ENCODE measurements at regions of chr16 and their contacts with region 1.

Region 1: DNA sequence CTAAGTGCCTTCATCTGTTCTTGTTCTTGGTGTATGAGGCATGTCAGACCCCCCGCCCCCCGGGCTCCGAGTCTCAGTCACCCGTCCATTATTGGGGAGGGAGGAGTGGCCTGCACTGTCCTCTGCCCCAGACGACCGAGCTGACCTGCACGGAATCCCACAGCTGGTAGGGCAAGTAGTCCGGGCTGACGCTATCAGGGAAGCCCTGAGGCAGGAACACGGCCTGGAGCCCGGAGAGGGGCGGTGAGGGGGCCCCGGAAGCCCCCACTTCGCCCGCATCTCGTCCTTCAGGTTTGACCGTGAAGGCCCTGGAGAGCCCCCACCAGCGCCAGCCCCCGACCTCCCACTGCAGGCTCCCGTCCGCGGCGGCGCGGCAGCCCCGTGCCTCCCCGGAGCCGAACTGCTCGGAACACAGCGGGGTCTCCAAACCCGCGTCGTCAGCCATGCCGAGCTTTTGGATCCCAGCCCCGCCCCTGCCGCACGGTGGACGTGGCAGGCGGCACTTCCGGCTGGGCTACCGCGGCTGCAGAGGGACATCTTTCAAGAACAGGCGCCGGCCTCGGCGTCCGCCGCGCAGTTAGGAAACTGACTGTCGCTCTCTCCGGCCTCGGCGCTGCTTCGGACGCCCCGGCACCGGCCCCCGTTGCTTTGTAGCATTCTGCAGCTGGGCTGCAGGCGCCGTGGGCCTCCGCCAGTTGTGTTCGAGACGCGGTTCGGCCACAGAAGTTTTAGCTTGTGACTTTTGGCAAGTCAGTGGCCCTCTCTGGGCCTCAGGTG is at the start of gene RUSF1:
- DNase-seq: peak; percentile 89
- ATAC-seq: peak; percentile 93
- H3K4me3 ChIP-seq: peak within 1 kb of the TSS; percentile 90 to 98 (median 90)
- H3K27ac ChIP-seq: peak within 1 kb of the TSS; percentile 89
- H3K4me1 ChIP-seq: peaks cover 46% of the 10 kb centered on the region
- H3K27me3 ChIP-seq: peaks cover 0 to 6% of the 10 kb centered on the region in 2 experiments; a peak in 2 of 5 replicates
- CTCF ChIP-seq: peak; percentile 37; the same call in 1 of the 2 replicates
- EP300 ChIP-seq: peak; percentile 52 to 55; a peak in 2 of 4 replicates
- POLR2A ChIP-seq: peak; percentile 91 to 96
- RAD21 ChIP-seq: peak; percentile 42
- total RNA-seq, gene RUSF1: 18.3 and 40.8 TPM in 2 replicates

Region 2: GRCh38 chr16:31354394-31355291 is 153.5 kb before region 1 on chr16 and contains the start of gene ITGAX:
- CTCF ChIA-PET with region 1: no interaction called
- POLR2A ChIA-PET with region 1: no interaction called
- in situ Hi-C with region 1: no loop called
- intact Hi-C with region 1: no loop called
- DNase-seq: no peak
- ATAC-seq: no peak
- H3K4me3 ChIP-seq: no peak within 1 kb of the TSS
- H3K27ac ChIP-seq: no peak within 1 kb of the TSS
- H3K4me1 ChIP-seq: no peaks in the 10 kb centered on the region
- H3K27me3 ChIP-seq: peaks cover 10 to 39% of the 10 kb centered on the region in 2 experiments; a peak in 4 of 5 replicates
- CTCF ChIP-seq: no peak
- EP300 ChIP-seq: no peak
- POLR2A ChIP-seq: no peak
- RAD21 ChIP-seq: no peak
- total RNA-seq, gene ITGAX: not detected in 2 replicates

Region 3: DNA sequence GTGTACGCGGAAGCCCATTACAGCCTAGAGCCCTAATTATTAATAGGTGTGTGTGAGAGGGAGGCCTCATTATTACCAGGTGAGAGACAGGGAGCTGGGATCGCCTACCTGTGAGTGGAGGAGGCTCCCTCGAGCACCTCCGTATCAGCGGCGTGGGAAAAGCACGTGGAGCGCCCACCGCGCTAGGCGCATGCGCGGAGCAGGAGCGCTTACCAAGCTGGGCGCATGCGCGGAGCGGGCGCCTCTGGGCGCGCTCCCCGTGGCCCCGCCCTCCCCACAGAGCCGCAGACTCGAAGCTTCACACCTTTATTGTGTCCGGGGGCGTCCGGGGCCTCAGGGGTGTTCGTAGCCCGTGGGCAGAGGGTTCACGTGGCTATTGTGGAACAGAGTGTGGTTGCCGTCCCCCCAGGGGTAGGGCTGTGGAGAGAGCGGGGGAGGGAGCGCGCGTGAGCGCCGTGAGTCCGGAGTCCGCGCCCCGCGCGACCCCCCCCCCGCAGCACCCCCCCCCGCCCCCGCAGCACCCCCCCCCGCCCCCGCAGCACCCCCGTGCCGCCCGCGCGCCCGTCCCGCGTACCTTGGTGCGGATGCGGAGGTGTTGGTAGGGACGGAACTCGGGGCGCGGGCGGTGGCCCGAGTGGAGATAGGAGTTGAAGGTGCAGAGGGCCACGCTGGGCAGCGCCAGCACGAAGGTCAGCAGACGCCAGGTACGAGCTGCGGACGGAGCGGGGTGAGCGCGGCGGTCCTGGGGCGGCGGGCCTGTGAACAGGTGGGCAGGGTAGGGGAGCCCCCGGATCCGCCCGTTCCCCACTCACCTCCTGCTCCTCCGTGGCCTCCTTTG is 80.5 kb before region 1 on chr16:
- CTCF ChIA-PET with region 1: no interaction called
- POLR2A ChIA-PET with region 1: no interaction called
- in situ Hi-C with region 1: no loop called
- intact Hi-C with region 1: no loop called
- DNase-seq: no peak
- ATAC-seq: no peak
- H3K4me3 ChIP-seq: no peak overlapping the region
- H3K27ac ChIP-seq: no peak overlapping the region
- H3K4me1 ChIP-seq: no peaks in the 10 kb centered on the region
- H3K27me3 ChIP-seq: peaks cover 0 to 19% of the 10 kb centered on the region in 2 experiments; a peak in 4 of 5 replicates
- CTCF ChIP-seq: no peak
- EP300 ChIP-seq: no peak
- POLR2A ChIP-seq: no peak
- RAD21 ChIP-seq: no peak

Region 4: GRCh38 chr16:31476303-31477219 is 31.6 kb before region 1 on chr16:
- CTCF ChIA-PET with region 1: no interaction called
- POLR2A ChIA-PET with region 1: interaction called, 40 read pairs
- in situ Hi-C with region 1: no loop called
- intact Hi-C with region 1: loop called (anchors 2 kb)
- DNase-seq: peak; percentile 63
- ATAC-seq: peak; percentile 63
- H3K4me3 ChIP-seq: peak overlapping the region; percentile 71 to 94 (median 92)
- H3K27ac ChIP-seq: peak overlapping the region; percentile 80
- H3K4me1 ChIP-seq: peaks cover 77% of the 10 kb centered on the region
- H3K27me3 ChIP-seq: peaks cover 0 to 16% of the 10 kb centered on the region in 2 experiments; a peak in 3 of 5 replicates
- CTCF ChIP-seq: no peak
- EP300 ChIP-seq: no peak
- POLR2A ChIP-seq: peak; percentile 8 to 72; a peak in 2 of 4 replicates
- RAD21 ChIP-seq: no peak

Region 5: DNA sequence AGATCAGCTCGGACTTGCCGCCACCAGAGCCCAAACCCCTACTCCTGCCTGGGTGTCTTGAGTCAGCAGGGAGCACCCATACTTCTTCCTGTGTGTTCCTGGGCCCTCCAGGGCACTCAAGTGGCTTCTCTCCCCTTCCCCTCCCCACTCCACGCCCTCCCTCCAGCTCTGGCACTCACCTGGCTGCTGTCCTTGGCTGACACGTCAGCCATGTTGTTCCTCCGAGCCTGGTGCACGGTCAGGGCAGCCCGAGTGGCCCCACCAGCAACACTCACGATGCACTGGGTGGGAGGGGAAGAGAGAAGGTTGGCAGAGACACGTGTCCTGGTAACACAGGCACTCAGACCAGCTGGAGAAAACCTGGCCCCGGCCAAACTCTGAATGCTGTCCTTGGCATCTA is 11.4 kb before region 1 on chr16:
- CTCF ChIA-PET with region 1: no interaction called
- POLR2A ChIA-PET with region 1: interaction called, 14 read pairs
- in situ Hi-C with region 1: no loop called
- intact Hi-C with region 1: no loop called
- DNase-seq: no peak
- ATAC-seq: no peak
- H3K4me3 ChIP-seq: no peak overlapping the region
- H3K27ac ChIP-seq: no peak overlapping the region
- H3K4me1 ChIP-seq: peaks cover 7% of the 10 kb centered on the region
- H3K27me3 ChIP-seq: no peaks in the 10 kb centered on the region
- CTCF ChIP-seq: no peak
- EP300 ChIP-seq: no peak
- POLR2A ChIP-seq: no peak
- RAD21 ChIP-seq: no peak

Region 6: DNA sequence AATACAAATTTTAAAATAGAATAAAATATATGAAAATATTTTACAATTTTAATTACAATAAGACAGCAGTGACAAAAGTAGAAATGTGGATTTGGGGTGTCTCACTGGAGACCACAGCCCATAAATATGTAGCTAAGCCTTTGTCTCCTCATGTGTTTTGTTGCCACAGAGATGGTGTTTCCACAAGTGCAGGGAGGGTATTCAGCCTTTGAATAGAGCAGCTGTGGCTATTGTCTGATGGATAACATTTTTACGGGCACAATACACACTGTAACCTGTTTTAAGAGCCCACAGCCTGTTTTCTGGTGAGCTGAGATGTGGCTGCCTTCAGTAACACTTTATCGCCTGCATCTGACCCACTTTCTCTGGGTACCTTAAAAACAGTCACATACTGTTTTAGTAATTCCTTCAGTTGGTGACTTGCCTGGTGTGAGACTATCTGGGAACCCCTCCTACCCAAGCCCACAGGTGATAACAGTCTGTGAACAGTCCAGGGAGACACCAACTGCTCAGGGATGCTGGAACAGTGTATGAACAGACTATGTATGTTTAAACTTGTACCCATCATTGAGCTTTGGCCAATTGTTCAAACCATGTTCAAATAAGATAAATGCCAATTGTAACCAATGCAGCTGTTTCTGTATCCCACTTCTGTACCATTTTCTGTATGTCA is 11.8 kb after region 1 on chr16:
- CTCF ChIA-PET with region 1: no interaction called
- POLR2A ChIA-PET with region 1: no interaction called
- in situ Hi-C with region 1: no loop called
- intact Hi-C with region 1: no loop called
- DNase-seq: no peak
- ATAC-seq: no peak
- H3K4me3 ChIP-seq: no peak overlapping the region
- H3K27ac ChIP-seq: no peak overlapping the region
- H3K4me1 ChIP-seq: peaks cover 16% of the 10 kb centered on the region
- H3K27me3 ChIP-seq: peaks cover 0 to 27% of the 10 kb centered on the region in 2 experiments; a peak in 2 of 5 replicates
- CTCF ChIP-seq: no peak
- EP300 ChIP-seq: no peak
- POLR2A ChIP-seq: no peak
- RAD21 ChIP-seq: no peak

Region 7: GRCh38 chr16:31700526-31701388 is 192.6 kb after region 1 on chr16:
- CTCF ChIA-PET with region 1: no interaction called
- POLR2A ChIA-PET with region 1: interaction called, 13 read pairs
- in situ Hi-C with region 1: no loop called
- intact Hi-C with region 1: loop called (anchors 2 kb)
- DNase-seq: peak; percentile 90
- ATAC-seq: peak; percentile 90
- H3K4me3 ChIP-seq: peak overlapping the region; percentile 75 to 97 (median 86)
- H3K27ac ChIP-seq: peak overlapping the region; percentile 91
- H3K4me1 ChIP-seq: peaks cover 49% of the 10 kb centered on the region
- H3K27me3 ChIP-seq: no peaks in the 10 kb centered on the region; a peak in 1 of 5 replicates
- CTCF ChIP-seq: peak; percentile 55
- EP300 ChIP-seq: peak; percentile 55 to 76; a peak in 3 of 4 replicates
- POLR2A ChIP-seq: peak; percentile 92 to 95
- RAD21 ChIP-seq: no peak; the same call in 1 of the 2 replicates

Region 8: GRCh38 chr16:31713071-31713944 is 205.2 kb after region 1 on chr16:
- CTCF ChIA-PET with region 1: no interaction called
- POLR2A ChIA-PET with region 1: interaction called, 13 read pairs
- in situ Hi-C with region 1: no loop called
- intact Hi-C with region 1: no loop called
- DNase-seq: peak; percentile 97
- ATAC-seq: peak; percentile 86
- H3K4me3 ChIP-seq: peak overlapping the region; percentile 74 to 99 (median 91)
- H3K27ac ChIP-seq: peak overlapping the region; percentile 95
- H3K4me1 ChIP-seq: peaks cover 42% of the 10 kb centered on the region
- H3K27me3 ChIP-seq: no peaks in the 10 kb centered on the region; a peak in 1 of 5 replicates
- CTCF ChIP-seq: peak; percentile 31
- EP300 ChIP-seq: no peak
- POLR2A ChIP-seq: peak; percentile 97 to 99
- RAD21 ChIP-seq: peak; percentile 48

Region 9: DNA sequence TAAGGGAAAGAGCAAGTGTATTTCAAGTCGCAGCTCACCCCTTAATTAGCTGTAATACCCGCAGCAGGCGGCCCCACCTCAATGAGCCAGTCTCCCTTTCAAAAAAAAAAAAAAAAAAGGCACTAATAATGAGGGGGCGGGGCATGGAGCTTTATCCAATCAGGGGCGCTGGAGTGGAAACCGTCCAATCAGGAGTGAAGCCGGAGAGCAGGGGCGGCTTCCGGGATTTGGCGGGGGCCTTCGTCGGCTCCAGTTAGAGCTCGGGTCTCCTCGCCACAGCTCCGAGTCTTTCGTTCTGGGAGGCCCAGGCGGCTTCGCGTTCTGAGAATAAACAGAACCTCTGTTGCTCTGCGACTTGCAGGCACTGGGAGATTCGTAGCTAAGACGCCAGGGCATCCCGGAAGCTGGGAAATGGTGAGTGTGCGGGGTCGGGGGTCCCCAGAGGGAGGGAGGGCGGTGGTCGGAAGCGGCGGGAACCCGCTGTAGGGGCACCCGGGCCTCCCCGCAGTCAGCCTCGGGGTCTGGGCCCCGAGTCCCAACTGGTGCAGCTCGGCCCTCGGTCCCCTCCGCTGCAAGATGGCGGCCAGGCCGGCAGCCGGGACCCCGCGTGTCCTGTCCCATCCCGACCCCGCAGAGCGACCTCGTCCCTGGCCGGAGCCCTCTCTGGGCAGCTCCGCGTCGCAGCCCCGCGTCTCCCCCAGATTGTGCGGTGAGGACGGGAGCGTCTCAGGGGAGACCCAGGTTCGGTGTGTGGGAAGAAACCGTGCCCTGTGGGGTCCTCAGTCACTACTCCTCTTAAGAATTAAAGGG is 365.6 kb after region 1 on chr16 and contains the start of gene ZNF267:
- CTCF ChIA-PET with region 1: no interaction called
- POLR2A ChIA-PET with region 1: interaction called, 7 read pairs
- in situ Hi-C with region 1: no loop called
- intact Hi-C with region 1: loop called (anchors 5 kb)
- DNase-seq: peak; percentile 94
- ATAC-seq: peak; percentile 90
- H3K4me3 ChIP-seq: peak within 1 kb of the TSS; percentile 89 to 99 (median 95)
- H3K27ac ChIP-seq: peak within 1 kb of the TSS; percentile 89
- H3K4me1 ChIP-seq: peaks cover 59% of the 10 kb centered on the region
- H3K27me3 ChIP-seq: peaks cover 0 to 13% of the 10 kb centered on the region in 2 experiments; a peak in 2 of 5 replicates
- CTCF ChIP-seq: no peak
- EP300 ChIP-seq: 0 out of 4 replicates have a peak, but pooled peaks of 1 of the 2 experiments have one; percentile 9
- POLR2A ChIP-seq: peak; percentile 86 to 92
- RAD21 ChIP-seq: peak; percentile 12; the same call in 1 of the 2 replicates
- total RNA-seq, gene ZNF267: 30.0 and 42.4 TPM in 2 replicates

Measured in HepG2 (cell line).